Psoas muscle (tissue), 8 donors: ENCODE measurements at regions of chr11 and their contacts with region 1.

Region 1: GRCh38 chr11:30346068-30346688 is 23.3 kb downstream of the ARL14EP start:
- DNase-seq: no peak
- ATAC-seq: peak in 2 of 4 donors; percentile 44 to 82
- H3K4me3 ChIP-seq: no peak overlapping the region
- H3K27ac ChIP-seq: no peak overlapping the region
- H3K4me1 ChIP-seq: no peaks in the 10 kb centered on the region
- H3K27me3 ChIP-seq: no peaks in the 10 kb centered on the region
- CTCF ChIP-seq: peak; percentile 61

Region 2: GRCh38 chr11:28713850-28714249 is 1632.3 kb before region 1 on chr11:
- intact Hi-C with region 1: no loop called
- DNase-seq: no peak
- ATAC-seq: no peak
- H3K4me3 ChIP-seq: no peak overlapping the region
- H3K27ac ChIP-seq: no peak overlapping the region
- H3K4me1 ChIP-seq: no peaks in the 10 kb centered on the region
- H3K27me3 ChIP-seq: no peaks in the 10 kb centered on the region
- CTCF ChIP-seq: no peak

Region 3: DNA sequence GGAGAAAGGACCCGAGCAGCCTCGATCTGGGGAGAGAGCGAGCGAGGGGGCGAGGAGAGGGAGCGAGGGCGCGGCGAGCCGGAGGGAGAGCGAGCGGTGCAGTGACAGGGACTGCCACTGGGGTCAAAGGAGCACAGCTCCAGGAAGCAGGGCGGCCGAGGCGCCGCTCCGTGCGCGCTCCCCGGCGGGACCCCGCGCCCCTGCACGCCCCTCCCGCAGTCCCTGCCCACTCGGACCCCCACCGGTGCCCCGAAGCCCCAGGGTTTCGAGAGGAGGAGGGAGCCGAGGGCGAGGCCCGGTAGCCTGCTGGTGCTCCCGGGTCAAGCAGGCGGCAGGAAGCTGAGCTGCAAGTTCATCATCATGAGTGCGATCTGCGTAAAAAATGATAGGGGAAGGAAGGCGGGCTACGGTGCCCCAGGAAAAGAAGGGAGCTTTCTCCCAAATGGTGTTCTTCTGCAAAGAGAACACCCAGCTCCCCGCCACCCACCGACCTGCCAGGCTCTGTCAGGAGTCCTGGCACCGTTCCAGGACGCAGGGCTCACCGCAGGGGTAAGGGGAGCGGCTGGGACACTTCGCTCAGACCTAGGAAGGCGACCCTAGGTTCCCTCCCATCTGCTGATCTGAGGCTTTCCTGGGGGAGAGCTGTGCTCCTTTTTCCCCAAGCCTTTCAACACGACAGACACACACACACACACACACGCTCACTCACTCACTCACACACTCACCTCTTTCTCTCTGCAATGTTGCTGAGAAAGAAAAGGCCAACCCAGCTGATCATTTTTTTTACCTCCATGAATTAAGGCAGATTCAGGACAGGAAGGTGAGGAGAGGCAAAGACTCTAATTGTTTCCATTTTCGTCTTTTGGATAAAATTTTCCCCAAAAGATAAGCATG is 240.3 kb after region 1 on chr11 and contains the start of gene MPPED2:
- intact Hi-C with region 1: loop called (anchors 2 to 5 kb)
- DNase-seq: peak; percentile 47 to 78
- ATAC-seq: peak; percentile 82 to 86 (median 85)
- H3K4me3 ChIP-seq: peak within 1 kb of the TSS; percentile 93
- H3K27ac ChIP-seq: peak within 1 kb of the TSS; percentile 82
- H3K4me1 ChIP-seq: no peaks in the 10 kb centered on the region
- H3K27me3 ChIP-seq: peaks cover 0 to 7% (median 0%) of the 10 kb centered on the region in 3 donors
- CTCF ChIP-seq: peak; percentile 52
- total RNA-seq, gene MPPED2: 3.4 to 7.9 (median 4.8) TPM

Region 4: GRCh38 chr11:30596832-30597231 is 250.7 kb after region 1 on chr11:
- intact Hi-C with region 1: no loop called
- DNase-seq: no peak
- ATAC-seq: no peak
- H3K4me3 ChIP-seq: no peak overlapping the region
- H3K27ac ChIP-seq: no peak overlapping the region
- H3K4me1 ChIP-seq: peaks cover 12% of the 10 kb centered on the region
- H3K27me3 ChIP-seq: no peaks in the 10 kb centered on the region
- CTCF ChIP-seq: no peak

Region 5: DNA sequence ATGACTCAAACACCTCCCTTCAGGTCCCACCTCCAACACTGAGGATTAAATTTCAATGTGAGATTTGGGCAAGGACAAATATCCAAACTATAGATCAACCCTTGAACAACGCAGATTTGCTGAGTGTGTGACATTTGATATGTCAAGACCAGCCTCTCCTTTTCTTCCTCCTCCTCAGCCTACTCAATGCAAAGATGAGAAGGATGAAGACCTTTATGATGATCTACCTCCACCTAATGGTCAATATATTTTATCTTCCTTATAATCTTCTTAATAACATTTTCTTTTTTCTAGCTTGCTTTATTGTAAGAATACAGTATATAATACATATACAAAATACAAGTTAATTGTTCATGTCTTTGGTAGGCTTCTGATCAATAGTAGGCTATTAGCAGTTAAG is 307.4 kb after region 1 on chr11:
- intact Hi-C with region 1: loop called (anchors 5 kb)
- DNase-seq: no peak
- ATAC-seq: peak in 1 of 4 donors; percentile 57
- H3K4me3 ChIP-seq: no peak overlapping the region
- H3K27ac ChIP-seq: no peak overlapping the region
- H3K4me1 ChIP-seq: no peaks in the 10 kb centered on the region
- H3K27me3 ChIP-seq: no peaks in the 10 kb centered on the region
- CTCF ChIP-seq: no peak

Region 6: GRCh38 chr11:30855383-30856006 is 509.3 kb after region 1 on chr11:
- intact Hi-C with region 1: loop called (anchors 5 kb)
- DNase-seq: no peak
- ATAC-seq: peak in 2 of 4 donors; percentile 51 to 69
- H3K4me3 ChIP-seq: no peak overlapping the region
- H3K27ac ChIP-seq: no peak overlapping the region
- H3K4me1 ChIP-seq: no peaks in the 10 kb centered on the region
- H3K27me3 ChIP-seq: no peaks in the 10 kb centered on the region
- CTCF ChIP-seq: peak; percentile 67

Region 7: DNA sequence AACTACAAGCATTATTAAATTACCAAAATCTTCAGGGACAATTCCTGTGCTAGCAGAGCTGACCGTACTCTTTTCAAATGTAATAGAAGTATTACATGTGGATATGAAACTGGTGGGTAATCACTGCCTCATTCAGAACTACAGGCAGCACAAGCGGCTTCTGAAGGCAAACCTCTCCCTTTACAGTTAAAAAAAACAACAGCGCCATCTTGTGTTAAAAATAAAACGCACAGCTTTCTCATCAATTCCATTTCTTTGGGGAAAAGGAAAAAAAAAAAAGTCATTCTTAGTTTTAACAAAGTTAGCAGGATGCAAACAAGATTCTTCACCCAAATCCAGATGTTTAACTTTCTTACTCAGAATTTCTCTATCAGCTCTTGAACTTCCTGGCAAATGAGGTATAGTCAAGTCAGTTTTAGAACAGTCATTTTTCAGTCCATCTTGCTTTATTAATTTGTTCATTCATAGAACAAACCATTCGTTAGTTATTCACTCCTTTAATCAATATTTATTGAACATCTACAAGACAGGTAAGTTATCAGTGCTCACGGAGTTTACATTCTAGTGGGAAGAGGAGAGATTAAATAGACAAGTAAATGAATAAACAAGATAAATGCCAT is 571.8 kb after region 1 on chr11:
- intact Hi-C with region 1: loop called (anchors 5 kb)
- DNase-seq: no peak
- ATAC-seq: peak in 1 of 4 donors; percentile 63
- H3K4me3 ChIP-seq: no peak overlapping the region
- H3K27ac ChIP-seq: no peak overlapping the region
- H3K4me1 ChIP-seq: no peaks in the 10 kb centered on the region
- H3K27me3 ChIP-seq: peaks cover 0 to 4% (median 0%) of the 10 kb centered on the region in 3 donors
- CTCF ChIP-seq: peak; percentile 71

Region 8: DNA sequence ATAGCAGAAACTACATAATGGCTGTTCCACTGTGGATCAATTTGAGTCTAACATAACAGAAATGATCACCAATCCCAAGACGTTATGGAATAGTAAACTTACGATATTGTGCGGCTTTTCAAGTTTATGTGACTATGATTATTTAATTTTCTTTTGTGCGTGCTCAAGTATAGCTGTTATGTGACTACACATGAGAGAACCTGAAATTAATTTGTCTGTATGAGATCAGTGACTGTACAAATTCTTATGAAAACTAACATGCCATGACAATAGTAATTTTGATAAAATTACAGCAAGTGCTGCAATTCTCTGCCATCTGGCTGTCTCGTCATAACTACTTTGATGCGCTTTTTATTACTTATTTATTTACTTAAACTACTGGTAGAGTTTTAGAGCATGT is 680.1 kb after region 1 on chr11:
- intact Hi-C with region 1: loop called in 1 of 2 experiments (anchors 5 kb)
- DNase-seq: no peak
- ATAC-seq: no peak
- H3K4me3 ChIP-seq: no peak overlapping the region
- H3K27ac ChIP-seq: no peak overlapping the region
- H3K4me1 ChIP-seq: no peaks in the 10 kb centered on the region
- H3K27me3 ChIP-seq: no peaks in the 10 kb centered on the region
- CTCF ChIP-seq: no peak